ENCODE measurements at regions of chr3 and their contacts with region 1.

Region 1: DNA sequence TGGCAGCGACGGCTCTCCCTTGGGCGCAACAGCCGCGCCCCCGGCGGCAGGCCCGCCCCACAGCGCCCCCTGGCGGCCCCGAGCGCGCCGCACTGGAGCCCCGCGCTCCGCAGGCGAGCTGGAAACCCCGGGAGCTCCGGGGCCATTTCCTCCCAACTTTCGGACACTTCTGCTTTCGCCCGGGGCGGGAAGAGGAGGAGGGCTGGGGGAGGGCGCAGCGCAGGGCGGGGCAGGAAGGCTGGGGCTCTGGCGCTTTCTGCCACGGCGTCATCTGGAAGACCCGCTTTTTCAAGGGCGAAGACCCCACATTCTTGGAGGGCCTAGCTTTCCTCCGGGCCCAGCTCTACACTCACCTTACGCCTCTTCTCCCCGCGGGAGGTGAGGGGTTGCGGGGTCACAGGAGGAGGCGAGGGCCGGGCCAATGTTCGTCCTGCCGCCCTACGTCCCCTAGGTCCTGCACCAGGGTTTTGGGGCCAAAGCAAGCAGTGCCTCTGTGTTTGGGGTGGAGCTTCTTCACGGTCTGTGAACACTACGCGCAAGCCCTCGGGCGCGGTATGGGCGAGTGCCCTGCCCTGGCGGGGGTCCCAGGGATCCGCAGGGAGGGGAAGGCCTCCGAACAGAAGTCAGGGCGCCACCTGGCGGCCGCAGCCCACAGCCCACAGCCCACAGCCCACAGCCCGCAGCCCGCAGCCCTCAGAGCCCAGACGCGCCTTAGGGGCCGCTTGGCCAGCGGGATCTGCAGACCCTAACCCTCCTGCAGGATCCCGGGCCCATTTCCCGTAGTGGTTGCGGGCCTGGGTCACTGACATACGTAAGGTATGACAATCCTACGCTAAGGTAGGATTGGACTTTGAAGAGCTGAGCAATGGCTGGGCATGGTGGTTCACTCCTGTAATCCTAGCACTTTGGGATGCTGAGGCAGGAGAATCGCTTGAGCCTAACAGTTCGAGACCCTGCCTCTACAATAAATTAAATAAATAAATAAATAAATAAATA is 31.1 kb downstream of the FOXL2 start:
- DNase-seq: peak; percentile 71
- H3K4me3 Mint-ChIP-seq: peak overlapping the region; percentile 86
- H3K27ac Mint-ChIP-seq: no peak overlapping the region
- H3K4me1 Mint-ChIP-seq: peaks cover 5% of the 10 kb centered on the region
- H3K27me3 Mint-ChIP-seq: peaks cover 13% of the 10 kb centered on the region

Region 2: GRCh38 chr3:138479438-138479863 is 436.4 kb before region 1 on chr3:
- intact Hi-C with region 1: loop called (anchors 2 kb)
- DNase-seq: no peak
- H3K4me3 Mint-ChIP-seq: no peak overlapping the region
- H3K27ac Mint-ChIP-seq: no peak overlapping the region
- H3K4me1 Mint-ChIP-seq: no peaks in the 10 kb centered on the region
- H3K27me3 Mint-ChIP-seq: peaks cover 7% of the 10 kb centered on the region

Region 3: GRCh38 chr3:138694287-138695007 is 221.4 kb before region 1 on chr3:
- intact Hi-C with region 1: loop called (anchors 1 kb)
- DNase-seq: no peak
- H3K4me3 Mint-ChIP-seq: no peak overlapping the region
- H3K27ac Mint-ChIP-seq: no peak overlapping the region
- H3K4me1 Mint-ChIP-seq: no peaks in the 10 kb centered on the region
- H3K27me3 Mint-ChIP-seq: no peaks in the 10 kb centered on the region

Region 4: DNA sequence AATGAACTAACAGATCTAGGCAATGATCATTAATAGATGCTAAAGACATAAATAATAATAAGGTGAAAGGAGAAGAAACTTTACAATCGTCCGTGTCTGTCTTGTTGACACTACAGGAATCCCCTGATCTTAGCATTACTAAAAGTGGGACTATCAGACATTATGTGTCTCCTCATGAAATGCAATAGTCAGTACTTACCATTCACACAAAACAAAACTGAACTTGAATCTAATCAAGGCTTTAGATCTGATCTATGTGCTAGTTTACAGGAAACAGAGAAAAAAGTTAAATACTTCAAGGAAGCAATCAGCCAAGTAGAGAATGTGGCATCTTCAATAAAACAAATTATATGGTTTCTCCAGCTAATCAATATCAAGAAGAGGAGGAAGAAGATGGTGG is 154.8 kb before region 1 on chr3:
- intact Hi-C with region 1: loop called (anchors 1 kb)
- DNase-seq: no peak
- H3K4me3 Mint-ChIP-seq: no peak overlapping the region
- H3K27ac Mint-ChIP-seq: peak overlapping the region; percentile 79
- H3K4me1 Mint-ChIP-seq: peaks cover 25% of the 10 kb centered on the region
- H3K27me3 Mint-ChIP-seq: no peaks in the 10 kb centered on the region

Region 5: DNA sequence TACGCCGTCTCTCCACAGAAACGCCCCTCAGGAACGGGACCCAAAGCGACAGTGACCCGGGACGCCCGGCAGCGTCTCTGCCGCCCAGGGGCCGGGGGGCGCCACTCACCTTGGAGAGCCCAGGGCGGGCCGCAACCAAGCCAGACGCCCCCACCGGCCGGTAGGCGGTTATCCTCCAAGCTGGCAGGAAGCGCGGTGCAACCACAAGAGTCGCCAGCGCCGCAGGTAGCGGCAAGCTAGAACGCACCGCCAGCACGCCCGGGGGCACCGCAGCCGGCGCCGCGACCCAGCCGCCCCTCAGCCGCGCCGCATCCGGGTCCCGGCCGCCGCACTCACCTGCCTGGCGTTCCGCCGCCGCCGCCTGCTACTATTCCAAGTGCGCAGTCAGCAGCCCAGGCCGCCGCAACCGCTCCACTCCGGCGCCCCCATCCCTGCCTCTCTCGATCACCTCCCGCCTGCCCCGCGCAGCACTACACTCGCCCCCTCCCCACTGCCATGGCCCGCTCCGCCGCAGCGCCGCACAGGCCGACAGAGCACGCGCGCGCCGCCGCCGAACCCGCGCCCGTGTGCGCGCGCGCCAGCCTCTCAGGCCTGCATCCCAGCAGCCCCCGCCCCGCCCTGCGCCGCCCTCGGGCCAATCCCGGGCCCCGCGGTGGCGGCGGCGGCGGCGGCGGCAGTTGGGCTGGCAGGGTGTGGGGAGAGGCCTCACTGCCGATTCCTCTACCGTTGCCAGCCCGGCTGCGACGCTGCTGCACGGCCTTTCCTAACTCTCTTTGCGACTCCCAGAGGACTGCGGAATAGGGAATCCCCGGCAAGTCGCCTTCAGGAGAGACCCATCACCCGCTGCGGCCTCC is 81.2 kb before region 1 on chr3 and contains the start of gene PIK3CB:
- intact Hi-C with region 1: loop called (anchors 1 kb)
- DNase-seq: peak; percentile 77
- H3K4me3 Mint-ChIP-seq: peak within 1 kb of the TSS; percentile 96
- H3K27ac Mint-ChIP-seq: peak within 1 kb of the TSS; percentile 94
- H3K4me1 Mint-ChIP-seq: peaks cover 16% of the 10 kb centered on the region
- H3K27me3 Mint-ChIP-seq: no peaks in the 10 kb centered on the region
- total RNA-seq, gene PIK3CB: 19.2 and 20.3 TPM in 2 replicates

Region 6: DNA sequence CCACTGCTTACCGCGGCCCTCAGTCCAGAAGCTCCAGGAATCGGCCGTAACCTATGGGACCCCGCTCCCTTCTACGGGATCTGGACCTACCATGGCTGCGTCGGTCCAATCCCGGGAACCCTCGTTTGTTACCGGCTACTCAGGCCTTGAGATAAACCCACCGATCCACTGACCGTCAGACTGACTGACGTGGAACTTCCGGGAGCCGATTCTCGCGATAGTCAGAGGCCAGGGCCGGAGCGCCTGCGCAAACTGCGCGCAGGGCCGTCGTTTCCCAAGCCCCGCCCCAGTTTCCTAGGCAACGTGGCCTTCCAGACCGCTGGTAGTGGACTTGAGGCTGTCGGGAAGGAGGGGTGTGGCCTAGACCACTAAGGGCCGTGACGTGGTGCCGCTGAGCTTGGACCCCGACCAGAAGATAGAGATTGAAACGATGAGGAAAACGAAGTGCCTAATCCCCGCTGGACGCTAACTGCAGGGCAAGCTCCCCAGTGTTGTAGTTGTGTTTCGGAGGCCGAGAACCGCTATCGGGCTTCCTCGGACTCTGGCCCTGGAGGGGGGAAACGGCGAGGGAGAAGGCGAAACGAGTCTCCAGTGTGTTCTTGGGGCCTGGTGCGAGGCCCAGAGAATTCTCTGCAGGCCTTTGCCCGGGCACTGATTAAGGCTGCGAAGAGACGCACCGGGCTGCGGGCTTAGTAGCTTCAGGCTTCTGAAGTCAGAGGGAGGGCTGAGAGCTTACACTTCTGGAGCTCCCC is 473.8 kb after region 1 on chr3 and contains the start of gene COPB2:
- intact Hi-C with region 1: loop called (anchors 1 kb)
- DNase-seq: peak; percentile 94
- H3K4me3 Mint-ChIP-seq: peak within 1 kb of the TSS; percentile 97
- H3K27ac Mint-ChIP-seq: peak within 1 kb of the TSS; percentile 98
- H3K4me1 Mint-ChIP-seq: peaks cover 39% of the 10 kb centered on the region
- H3K27me3 Mint-ChIP-seq: peaks cover 3% of the 10 kb centered on the region
- total RNA-seq, gene COPB2: 119 and 120 TPM in 2 replicates